Caco-2 (cell line): ENCODE measurements at regions of chr4 and their contacts with region 1.

Region 1: DNA sequence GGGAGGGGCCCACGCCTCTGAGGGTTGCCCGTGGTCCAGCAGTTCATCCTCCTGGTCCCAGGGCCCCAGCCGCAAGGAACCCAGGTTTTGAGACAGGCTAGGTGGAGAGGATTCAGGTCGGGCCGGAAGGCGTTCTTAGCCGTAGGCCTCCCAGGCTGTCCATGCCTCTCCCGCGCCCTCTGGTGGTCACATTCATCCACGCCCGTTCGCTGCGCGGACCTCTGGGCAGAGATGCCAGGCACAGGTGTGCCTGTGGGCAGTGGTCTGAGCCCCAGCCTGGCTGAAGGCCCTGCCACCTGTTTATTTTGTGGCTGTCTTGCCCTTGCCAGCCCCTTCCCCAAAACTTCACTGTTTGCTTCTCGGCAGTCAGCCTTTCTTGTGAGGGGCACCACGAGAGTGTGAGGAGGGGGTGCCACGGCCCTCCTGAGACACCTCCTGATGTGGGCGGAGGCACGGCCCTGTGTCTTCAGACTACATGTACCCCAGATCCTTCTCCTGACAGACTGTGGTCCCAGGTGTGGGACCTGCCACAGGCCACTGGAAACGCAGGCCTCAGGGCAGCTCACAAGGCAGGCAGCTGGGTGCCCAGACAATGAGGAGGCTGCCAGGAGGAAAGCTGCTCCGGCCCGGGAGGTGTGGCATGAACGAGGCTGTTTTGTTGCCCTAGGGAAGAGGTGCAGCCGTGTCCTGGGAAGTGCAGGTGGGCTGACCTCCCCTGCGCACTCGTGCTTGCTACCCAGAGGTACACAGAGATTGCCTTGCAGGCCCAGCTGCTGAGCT is 5.0 kb downstream of the UVSSA start:
- DNase-seq: peak; percentile 78 to 87
- H3K4me3 ChIP-seq: no peak overlapping the region
- H3K4me3 Mint-ChIP-seq: no peak overlapping the region
- H3K27ac Mint-ChIP-seq: no peak overlapping the region
- H3K4me1 ChIP-seq: 0 out of 2 replicates have a peak, but pooled peaks cover 10% of the 10 kb centered on the region
- H3K4me1 Mint-ChIP-seq: peaks cover 10% of the 10 kb centered on the region
- H3K27me3 ChIP-seq: no peaks in the 10 kb centered on the region
- H3K27me3 Mint-ChIP-seq: no peaks in the 10 kb centered on the region
- CTCF ChIP-seq: peak; percentile 80 to 88

Region 2: DNA sequence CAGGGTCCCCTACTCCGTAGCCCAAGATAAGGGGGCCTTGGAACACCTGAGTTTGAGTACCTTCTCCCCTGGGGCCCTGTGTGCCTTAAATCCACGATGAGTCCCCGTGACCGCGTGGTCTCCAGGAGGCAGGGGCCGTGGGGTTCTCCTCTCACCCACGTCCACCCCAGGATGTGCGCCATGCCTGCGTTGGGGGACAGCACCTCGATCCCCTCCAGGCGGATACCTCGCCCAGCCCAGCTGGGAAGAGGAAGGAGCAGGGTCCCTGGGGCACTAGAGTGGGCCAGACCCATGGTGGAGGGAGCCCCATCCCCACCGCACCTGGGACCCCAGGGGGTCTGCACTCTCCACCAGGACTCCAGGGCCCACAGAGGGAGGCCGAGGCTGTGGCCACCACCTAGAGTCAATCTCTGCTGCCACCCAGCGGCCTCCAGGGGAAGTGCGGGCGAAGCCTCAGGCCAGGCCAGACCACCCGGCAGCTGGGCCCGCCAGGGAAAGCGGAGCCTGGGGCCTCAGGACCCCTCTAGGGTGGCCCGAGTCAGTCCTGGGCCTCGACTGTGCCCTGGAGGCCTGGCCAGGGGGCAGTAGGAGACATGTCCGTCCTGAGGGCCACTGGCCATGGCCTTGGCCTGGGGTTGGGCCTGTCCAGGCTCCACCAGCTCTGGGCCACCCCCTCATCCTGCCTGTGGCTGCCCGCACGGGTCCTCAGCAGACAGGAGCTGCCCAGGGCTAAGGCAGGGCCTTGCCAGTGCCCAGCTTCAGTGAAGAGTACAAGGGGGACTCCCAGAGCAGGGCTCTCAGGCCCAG is 277.1 kb after region 1 on chr4:
- CTCF ChIA-PET with region 1: interaction called, 3 read pairs
- POLR2A ChIA-PET with region 1: no interaction called
- intact Hi-C with region 1: loop called (anchors 1 kb)
- DNase-seq: peak; percentile 58 to 79
- H3K4me3 ChIP-seq: no peak overlapping the region
- H3K4me3 Mint-ChIP-seq: no peak overlapping the region
- H3K27ac Mint-ChIP-seq: no peak overlapping the region
- H3K4me1 ChIP-seq: no peaks in the 10 kb centered on the region
- H3K4me1 Mint-ChIP-seq: no peaks in the 10 kb centered on the region
- H3K27me3 ChIP-seq: no peaks in the 10 kb centered on the region
- H3K27me3 Mint-ChIP-seq: peaks cover 3% of the 10 kb centered on the region
- CTCF ChIP-seq: peak; percentile 90 to 91

Region 3: DNA sequence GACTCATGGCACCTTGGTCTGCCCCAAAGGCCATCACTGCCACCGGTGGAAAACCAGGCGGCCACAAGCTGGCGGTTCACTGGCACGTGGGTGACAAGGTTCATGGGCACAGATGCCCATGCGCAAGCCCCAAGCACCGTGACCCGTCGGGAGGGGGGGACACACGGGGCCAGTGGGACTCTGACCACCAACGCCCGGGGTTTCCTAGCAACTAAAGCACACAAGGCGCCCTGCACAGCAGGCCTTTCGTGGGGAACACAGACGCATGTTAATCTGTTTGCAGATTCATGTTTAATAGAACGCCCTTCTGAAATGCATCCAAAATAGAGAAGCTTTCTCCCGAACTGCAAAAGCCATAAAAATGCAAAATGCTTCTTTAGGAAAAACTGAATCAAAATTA is 288.1 kb after region 1 on chr4:
- CTCF ChIA-PET with region 1: no interaction called
- POLR2A ChIA-PET with region 1: no interaction called
- intact Hi-C with region 1: no loop called
- DNase-seq: no peak
- H3K4me3 ChIP-seq: no peak overlapping the region
- H3K4me3 Mint-ChIP-seq: no peak overlapping the region
- H3K27ac Mint-ChIP-seq: no peak overlapping the region
- H3K4me1 ChIP-seq: no peaks in the 10 kb centered on the region
- H3K4me1 Mint-ChIP-seq: no peaks in the 10 kb centered on the region
- H3K27me3 ChIP-seq: no peaks in the 10 kb centered on the region
- H3K27me3 Mint-ChIP-seq: no peaks in the 10 kb centered on the region
- CTCF ChIP-seq: no peak